Activated CD4-positive, alpha-beta memory T cell treated with anti-CD3 and anti-CD28 coated beads for 36 hours (primary cell): ENCODE measurements at regions of chr11 and their contacts with region 1.

Region 1: GRCh38 chr11:88813233-88813915 is 252.4 kb downstream of the GRM5 start:
- DNase-seq: no peak
- H3K4me3 Mint-ChIP-seq: no peak overlapping the region
- H3K27ac Mint-ChIP-seq: no peak overlapping the region
- H3K4me1 Mint-ChIP-seq: peaks cover 4% of the 10 kb centered on the region
- H3K27me3 Mint-ChIP-seq: no peaks in the 10 kb centered on the region

Region 2: GRCh38 chr11:88744140-88744539 is 69.2 kb before region 1 on chr11:
- CTCF ChIA-PET with region 1: no interaction called
- POLR2A ChIA-PET with region 1: no interaction called
- intact Hi-C with region 1: no loop called
- DNase-seq: no peak
- H3K4me3 Mint-ChIP-seq: no peak overlapping the region
- H3K27ac Mint-ChIP-seq: no peak overlapping the region
- H3K4me1 Mint-ChIP-seq: no peaks in the 10 kb centered on the region
- H3K27me3 Mint-ChIP-seq: peaks cover 1% of the 10 kb centered on the region

Region 3: GRCh38 chr11:88849368-88849767 is 36.0 kb after region 1 on chr11:
- CTCF ChIA-PET with region 1: no interaction called
- POLR2A ChIA-PET with region 1: no interaction called
- intact Hi-C with region 1: loop called (anchors 5 kb)
- DNase-seq: no peak
- H3K4me3 Mint-ChIP-seq: no peak overlapping the region
- H3K27ac Mint-ChIP-seq: no peak overlapping the region
- H3K4me1 Mint-ChIP-seq: peaks cover 15% of the 10 kb centered on the region
- H3K27me3 Mint-ChIP-seq: no peaks in the 10 kb centered on the region